Prostate gland (tissue), 2 donors: ENCODE measurements at regions of chr10 and their contacts with region 1.

Region 1: DNA sequence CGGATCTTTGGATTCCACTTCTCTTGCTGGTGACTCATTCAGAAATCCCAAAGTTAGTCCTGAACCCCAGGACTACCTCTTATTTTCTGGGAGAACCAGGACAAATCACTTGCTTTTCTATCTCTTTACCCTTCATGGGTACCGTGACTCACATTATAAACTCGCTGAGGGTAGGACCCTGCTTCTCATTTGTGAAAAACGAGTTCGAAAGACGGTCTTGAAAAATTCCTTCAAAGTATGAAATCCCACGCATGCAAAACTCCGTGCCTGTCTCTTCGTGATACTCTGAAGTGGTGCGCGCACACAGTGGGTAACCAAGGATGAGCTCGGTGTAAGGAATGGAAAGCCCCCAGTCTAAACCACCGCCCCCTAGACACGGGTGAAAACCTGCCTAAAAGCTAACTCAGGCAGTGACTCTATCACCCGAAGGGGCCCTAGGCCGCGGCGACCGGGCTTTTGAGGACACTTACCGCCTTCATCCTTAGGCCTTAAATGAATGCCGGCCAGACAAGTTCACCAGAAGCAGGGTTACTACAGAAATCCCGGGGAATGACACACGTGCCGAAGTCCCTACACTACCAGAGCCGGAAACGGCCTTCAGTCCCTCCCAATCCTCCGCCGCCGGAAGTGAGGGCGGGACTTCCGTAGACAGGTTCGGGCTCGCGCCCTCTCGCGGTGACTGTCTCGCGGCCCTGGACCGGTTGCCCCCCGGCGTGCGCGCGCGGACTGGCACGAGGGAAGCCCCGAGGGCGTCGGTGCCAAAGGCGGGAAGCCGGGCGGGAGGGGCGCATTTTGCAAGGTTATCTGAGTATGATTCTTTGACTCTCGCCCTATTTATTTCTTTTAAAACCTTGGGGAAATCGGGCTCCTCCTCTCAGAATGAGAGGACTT is at the start of gene NOC3L:
- DNase-seq: peak; percentile 93
- H3K4me3 ChIP-seq: peak within 1 kb of the TSS; percentile 37 to 58
- H3K27ac ChIP-seq: peak within 1 kb of the TSS; percentile 18 to 39
- H3K4me1 ChIP-seq: no peaks in the 10 kb centered on the region
- H3K27me3 ChIP-seq: no peaks in the 10 kb centered on the region
- CTCF ChIP-seq: peak; percentile 84 to 96 (median 86)
- POLR2A ChIP-seq: peak; percentile 16
- total RNA-seq, gene NOC3L: 15.6 to 15.8 TPM

Region 2: DNA sequence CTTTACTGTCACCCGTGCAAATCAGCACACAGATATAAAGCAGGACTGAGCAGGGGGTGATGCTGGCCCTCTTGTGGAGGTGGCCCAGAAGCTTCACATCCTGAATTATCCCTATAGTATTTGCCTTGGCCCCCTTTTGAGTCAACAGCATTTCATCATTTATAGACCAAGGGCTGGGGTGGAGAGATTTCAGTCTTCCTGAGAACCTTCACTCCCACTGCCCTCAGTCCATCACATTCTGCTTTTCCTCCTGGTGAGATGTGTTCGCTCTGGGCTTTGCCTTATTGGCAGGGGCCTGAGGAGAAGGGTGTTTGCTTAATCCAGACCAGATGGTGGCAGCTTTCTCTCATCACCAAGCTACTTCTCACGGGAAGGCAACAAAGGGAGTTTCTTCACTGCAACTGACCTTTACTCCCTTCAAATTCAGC is 47.6 kb before region 1 on chr10:
- intact Hi-C with region 1: no loop called
- DNase-seq: no peak
- H3K4me3 ChIP-seq: no peak overlapping the region
- H3K27ac ChIP-seq: no peak overlapping the region
- H3K4me1 ChIP-seq: no peaks in the 10 kb centered on the region
- H3K27me3 ChIP-seq: no peaks in the 10 kb centered on the region
- CTCF ChIP-seq: no peak
- POLR2A ChIP-seq: no peak

Region 3: DNA sequence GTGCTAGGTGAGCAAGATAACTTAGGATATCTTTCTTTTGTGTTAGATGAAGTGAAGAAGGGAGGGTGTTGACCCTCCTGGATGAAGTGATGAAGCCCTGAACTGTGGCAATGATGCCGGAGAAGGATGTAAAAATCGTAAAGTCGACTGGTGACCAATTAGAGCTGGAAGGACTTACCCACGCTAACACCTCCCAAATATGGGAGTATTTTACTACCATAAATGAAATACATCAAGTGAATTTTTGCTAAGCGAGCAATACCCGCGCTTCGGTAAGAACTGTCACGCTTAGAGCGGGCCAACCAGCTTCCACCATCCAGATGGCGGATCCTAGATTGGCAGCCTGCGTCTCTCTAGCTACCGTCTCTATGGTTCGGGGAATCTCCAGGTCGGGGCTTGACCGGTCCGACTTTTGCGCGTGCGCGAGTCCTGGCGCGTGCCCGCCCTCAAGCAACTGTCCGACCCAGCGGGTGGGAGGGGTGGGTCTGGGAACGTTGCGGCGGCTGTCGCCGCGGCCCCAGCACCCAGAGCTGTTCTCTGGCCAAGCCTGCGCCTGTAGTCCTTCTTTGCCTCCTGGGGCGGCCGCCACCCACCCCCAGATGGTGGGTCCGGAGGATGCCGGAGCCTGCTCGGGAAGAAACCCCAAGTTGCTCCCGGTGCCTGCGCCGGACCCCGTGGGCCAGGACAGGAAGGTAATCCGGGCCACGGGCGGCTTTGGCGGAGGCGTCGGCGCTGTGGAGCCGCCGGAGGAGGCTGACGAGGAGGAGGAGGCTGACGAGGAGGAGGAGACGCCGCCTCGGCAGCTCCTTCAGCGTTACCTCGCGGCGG is 39.6 kb after region 1 on chr10 and contains the start of gene TBC1D12:
- intact Hi-C with region 1: loop called (anchors 2 kb)
- DNase-seq: peak; percentile 95
- H3K4me3 ChIP-seq: peak within 1 kb of the TSS; percentile 77 to 81
- H3K27ac ChIP-seq: peak within 1 kb of the TSS; percentile 95 to 97
- H3K4me1 ChIP-seq: no peaks in the 10 kb centered on the region
- H3K27me3 ChIP-seq: no peaks in the 10 kb centered on the region
- CTCF ChIP-seq: peak in 1 of 4 experiments; percentile 4
- POLR2A ChIP-seq: peak; percentile 77
- total RNA-seq, gene TBC1D12: 13.8 to 22.3 TPM